Right ventricle myocardium superior (tissue), 1 donor: ENCODE measurements at regions of chr16 and their contacts with region 1.

Region 1: GRCh38 chr16:84617791-84618580 is at the start of gene COTL1:
- DNase-seq: peak; percentile 99
- ATAC-seq: peak; percentile 94
- total RNA-seq, gene COTL1: 14.4 TPM

Region 2: DNA sequence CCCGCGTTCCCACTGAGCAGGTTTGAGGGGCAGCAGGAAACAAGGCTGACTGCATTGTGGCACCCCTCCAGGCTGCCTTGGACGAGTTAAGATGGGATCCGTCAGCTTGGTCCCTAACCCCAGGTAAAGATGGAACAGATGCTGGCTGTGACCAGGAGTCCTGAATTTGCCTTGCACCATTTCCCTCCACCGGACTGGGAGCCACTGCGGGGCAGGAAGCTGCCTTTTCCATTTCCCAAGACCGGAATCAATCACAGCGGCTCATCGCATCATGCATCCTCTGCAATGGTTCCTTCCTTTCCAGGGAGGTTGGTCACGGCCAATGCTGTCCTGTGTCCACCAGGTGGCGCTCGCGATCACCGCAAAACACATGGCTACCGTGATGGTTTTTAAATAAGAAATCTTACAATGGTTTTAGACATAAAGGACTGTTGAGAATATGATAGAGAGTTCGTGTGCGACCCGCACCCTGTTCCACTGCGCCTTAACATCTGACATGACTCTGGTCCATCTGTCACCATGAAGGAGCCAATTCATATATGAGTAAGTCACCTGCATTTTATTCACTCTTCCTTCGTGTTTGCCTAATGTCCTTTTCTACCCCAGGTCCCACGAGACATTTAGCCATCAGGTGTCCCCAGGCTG is 106.7 kb before region 1 on chr16:
- intact Hi-C with region 1: loop called (anchors 2 kb)
- DNase-seq: peak; percentile 88
- ATAC-seq: peak; percentile 88

Region 3: GRCh38 chr16:84726079-84726668 is 108.2 kb after region 1 on chr16:
- intact Hi-C with region 1: loop called (anchors 2 kb)
- DNase-seq: peak; percentile 95
- ATAC-seq: peak; percentile 82